Naive thymus-derived CD4-positive, alpha-beta T cell (primary cell): ENCODE measurements at regions of chr11 and their contacts with region 1.

Region 1: DNA sequence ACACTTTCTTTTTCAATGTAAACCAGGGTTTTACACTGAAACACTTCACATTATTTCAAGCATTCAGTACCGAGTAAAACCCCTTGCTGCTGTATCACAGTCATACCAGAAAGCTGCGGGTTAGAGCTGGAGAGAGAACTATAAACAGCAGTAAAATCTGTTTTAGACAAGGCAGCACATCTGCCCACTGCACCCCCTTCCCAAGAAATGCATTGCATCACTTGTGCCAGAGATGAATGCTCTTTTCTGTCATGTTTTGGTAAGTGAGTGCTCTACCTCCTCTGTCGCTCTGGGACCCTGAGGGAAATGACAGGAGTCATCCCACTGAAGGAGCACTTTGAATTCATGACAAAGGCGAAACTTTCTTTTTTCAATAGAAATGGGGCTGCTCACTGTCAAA is 107.2 kb downstream of the MAML2 start:
- DNase-seq: peak in 1 of 9 donors; percentile 64
- ATAC-seq: peak; percentile 57
- H3K4me3 ChIP-seq: no peak overlapping the region
- H3K4me3 Mint-ChIP-seq: peak overlapping the region in 8 of 10 donors; percentile 9 to 70 (median 39)
- H3K27ac ChIP-seq: peak overlapping the region; percentile 6
- H3K27ac Mint-ChIP-seq: peak overlapping the region in 6 of 9 donors; percentile 38 to 83 (median 64)
- H3K4me1 ChIP-seq: peaks cover 0 to 53% of the 10 kb centered on the region in 2 donors
- H3K4me1 Mint-ChIP-seq: peaks cover 20 to 40% (median 28%) of the 10 kb centered on the region in 7 donors
- H3K27me3 ChIP-seq: no peaks in the 10 kb centered on the region
- H3K27me3 Mint-ChIP-seq: no peaks in the 10 kb centered on the region

Region 2: DNA sequence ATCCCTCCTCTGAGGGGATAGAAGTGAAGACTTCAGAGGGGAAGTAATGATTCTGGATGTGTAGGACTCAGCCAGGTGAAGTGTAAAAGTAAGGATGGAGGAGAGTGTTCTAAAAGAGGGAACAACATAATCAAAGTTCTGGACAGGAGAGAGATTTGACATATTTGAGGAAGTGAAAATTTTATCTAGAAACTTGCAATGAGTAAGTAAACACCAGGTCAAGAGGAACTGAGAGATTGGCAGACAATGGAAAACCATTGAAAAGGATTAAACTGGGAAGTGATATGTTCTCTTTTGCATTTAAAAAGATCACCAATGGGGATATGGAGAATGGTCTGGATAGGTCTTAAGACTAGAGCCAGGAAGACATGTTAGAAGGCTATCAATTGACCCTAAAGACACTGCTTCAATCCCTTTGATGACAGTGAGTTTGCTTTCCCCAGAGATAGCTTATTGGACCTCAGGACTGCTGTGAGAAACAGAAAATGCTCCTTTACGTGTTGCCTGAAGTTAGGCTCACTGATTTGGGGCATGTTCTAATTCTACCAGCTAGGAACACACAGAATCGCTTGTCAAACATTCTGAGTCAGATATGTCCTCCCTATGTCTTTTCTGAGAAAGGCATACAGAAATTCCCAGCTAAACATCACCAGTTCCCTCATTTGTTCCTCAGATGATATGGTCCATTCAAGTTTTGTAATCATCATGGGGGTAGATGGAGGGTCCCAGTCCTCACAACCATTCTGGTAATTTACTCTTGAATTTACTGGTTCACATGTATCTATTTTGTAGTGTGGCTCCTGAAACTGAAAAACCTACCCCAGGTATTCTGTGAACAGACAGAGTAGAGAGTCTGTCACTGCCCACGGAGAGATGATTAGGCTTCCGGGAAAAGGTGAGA is 37.7 kb before region 1 on chr11:
- CTCF ChIA-PET with region 1: no interaction called
- POLR2A ChIA-PET with region 1: interaction called, 11 read pairs
- intact Hi-C with region 1: no loop called
- DNase-seq: no peak
- ATAC-seq: peak; percentile 57
- H3K4me3 ChIP-seq: no peak overlapping the region
- H3K4me3 Mint-ChIP-seq: peak overlapping the region in 5 of 10 donors; percentile 13 to 59 (median 41)
- H3K27ac ChIP-seq: no peak overlapping the region
- H3K27ac Mint-ChIP-seq: peak overlapping the region in 8 of 9 donors; percentile 21 to 82 (median 58)
- H3K4me1 ChIP-seq: peaks cover 25 to 49% of the 10 kb centered on the region in 2 donors
- H3K4me1 Mint-ChIP-seq: peaks cover 45 to 93% (median 87%) of the 10 kb centered on the region in 7 donors
- H3K27me3 ChIP-seq: no peaks in the 10 kb centered on the region
- H3K27me3 Mint-ChIP-seq: no peaks in the 10 kb centered on the region

Region 3: DNA sequence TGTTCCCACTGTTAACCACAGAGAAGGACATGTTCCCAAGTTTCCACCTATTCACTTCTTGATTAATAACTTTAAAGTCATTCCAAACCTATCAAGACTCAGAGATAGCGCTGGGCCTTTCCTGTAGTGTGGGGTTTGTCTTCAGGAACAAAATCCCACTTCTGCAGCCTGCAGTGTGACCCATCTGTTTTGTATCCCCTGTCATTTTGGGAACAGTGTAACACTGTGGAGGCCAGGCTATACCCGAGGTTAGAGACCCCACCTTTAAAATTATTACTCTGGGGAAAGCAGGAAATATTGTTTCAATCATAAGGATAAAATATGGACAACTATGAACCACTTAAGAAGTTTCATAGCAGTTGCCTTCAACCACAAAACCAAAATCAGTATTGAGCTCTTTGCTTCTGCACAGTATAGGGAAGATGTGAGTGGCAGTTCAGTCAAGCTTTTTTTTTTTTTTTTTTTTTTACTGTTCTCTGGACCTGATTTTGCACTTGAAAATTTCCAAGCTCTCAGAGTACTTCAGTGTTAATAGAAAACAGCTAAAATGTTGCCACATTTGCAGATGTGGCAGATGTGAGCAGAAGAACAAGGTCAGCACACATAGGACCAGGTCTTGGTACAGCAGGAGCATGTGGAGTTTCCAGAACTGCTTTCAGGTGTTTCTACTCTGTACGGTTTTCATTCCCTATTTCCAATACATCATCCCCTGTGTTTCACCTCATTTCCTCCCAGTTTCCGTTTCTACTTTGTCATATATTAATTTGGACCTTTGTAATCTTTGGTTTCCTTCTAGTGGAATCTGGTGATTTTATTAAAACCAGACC is 14.3 kb before region 1 on chr11:
- CTCF ChIA-PET with region 1: interaction called, 4 read pairs
- POLR2A ChIA-PET with region 1: interaction called, 16 read pairs
- intact Hi-C with region 1: loop called in 1 of 2 experiments (anchors 1 kb)
- DNase-seq: no peak
- ATAC-seq: peak; percentile 65
- H3K4me3 ChIP-seq: no peak overlapping the region
- H3K4me3 Mint-ChIP-seq: peak overlapping the region; percentile 29 to 81 (median 51)
- H3K27ac ChIP-seq: peak overlapping the region; percentile 75
- H3K27ac Mint-ChIP-seq: peak overlapping the region in 8 of 9 donors; percentile 80 to 99 (median 86)
- H3K4me1 ChIP-seq: peaks cover 51 to 79% of the 10 kb centered on the region in 2 donors
- H3K4me1 Mint-ChIP-seq: peaks cover 43 to 97% (median 86%) of the 10 kb centered on the region in 7 donors
- H3K27me3 ChIP-seq: no peaks in the 10 kb centered on the region
- H3K27me3 Mint-ChIP-seq: no peaks in the 10 kb centered on the region